ENCODE measurements at regions of chr12 and their contacts with region 1.

Region 1: GRCh38 chr12:55073043-55074022 is 52.9 kb upstream of the OR9K2 start:
- DNase-seq: peak; percentile 90
- H3K4me3 Mint-ChIP-seq: no peak overlapping the region
- H3K27ac Mint-ChIP-seq: no peak overlapping the region
- H3K4me1 Mint-ChIP-seq: peaks cover 3% of the 10 kb centered on the region
- H3K27me3 Mint-ChIP-seq: peaks cover 21% of the 10 kb centered on the region

Region 2: GRCh38 chr12:54603173-54603814 is 470.0 kb before region 1 on chr12:
- CTCF ChIA-PET with region 1: interaction called, 5 read pairs
- intact Hi-C with region 1: loop called (anchors 2 kb)
- DNase-seq: peak; percentile 87
- H3K4me3 Mint-ChIP-seq: no peak overlapping the region
- H3K27ac Mint-ChIP-seq: no peak overlapping the region
- H3K4me1 Mint-ChIP-seq: peaks cover 2% of the 10 kb centered on the region
- H3K27me3 Mint-ChIP-seq: no peaks in the 10 kb centered on the region

Region 3: GRCh38 chr12:54723379-54724256 is 349.7 kb before region 1 on chr12:
- CTCF ChIA-PET with region 1: interaction called, 13 read pairs
- intact Hi-C with region 1: loop called (anchors 1 kb)
- DNase-seq: peak; percentile 46
- H3K4me3 Mint-ChIP-seq: no peak overlapping the region
- H3K27ac Mint-ChIP-seq: no peak overlapping the region
- H3K4me1 Mint-ChIP-seq: peaks cover 19% of the 10 kb centered on the region
- H3K27me3 Mint-ChIP-seq: no peaks in the 10 kb centered on the region

Region 4: GRCh38 chr12:54853995-54854566 is 219.3 kb before region 1 on chr12 and contains the start of gene MUCL1:
- CTCF ChIA-PET with region 1: interaction called, 27 read pairs
- intact Hi-C with region 1: loop called (anchors 1 kb)
- DNase-seq: peak; percentile 89
- H3K4me3 Mint-ChIP-seq: no peak within 1 kb of the TSS
- H3K27ac Mint-ChIP-seq: no peak within 1 kb of the TSS
- H3K4me1 Mint-ChIP-seq: peaks cover 16% of the 10 kb centered on the region
- H3K27me3 Mint-ChIP-seq: no peaks in the 10 kb centered on the region
- total RNA-seq, gene MUCL1: not detected

Region 5: GRCh38 chr12:54984658-54985376 is 88.5 kb before region 1 on chr12 and contains the start of gene TESPA1:
- CTCF ChIA-PET with region 1: interaction called, 22 read pairs
- intact Hi-C with region 1: no loop called
- DNase-seq: peak; percentile 94
- H3K4me3 Mint-ChIP-seq: peak within 1 kb of the TSS; percentile 75
- H3K27ac Mint-ChIP-seq: peak within 1 kb of the TSS; percentile 89
- H3K4me1 Mint-ChIP-seq: peaks cover 56% of the 10 kb centered on the region
- H3K27me3 Mint-ChIP-seq: no peaks in the 10 kb centered on the region
- total RNA-seq, gene TESPA1: 43.9 to 45.1 TPM

Region 6: DNA sequence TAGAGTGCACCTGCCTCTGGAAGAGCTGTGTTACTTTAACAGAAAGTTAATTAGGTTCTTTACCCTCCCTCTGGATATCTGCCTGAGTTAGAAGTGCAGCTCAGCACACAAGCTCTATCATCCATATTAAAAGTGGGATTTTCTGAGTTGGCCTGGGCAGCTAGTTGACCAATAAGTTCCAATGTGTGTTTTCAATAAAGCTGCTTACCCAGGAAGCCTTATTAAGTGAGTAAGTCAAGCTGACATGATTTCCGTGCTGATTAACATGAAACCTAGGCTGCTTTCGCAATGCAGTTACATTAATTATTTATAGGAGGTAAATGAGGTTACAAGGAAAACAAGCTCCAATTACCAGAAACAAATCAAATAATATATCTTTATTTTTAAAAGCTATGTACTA is 48.8 kb before region 1 on chr12:
- CTCF ChIA-PET with region 1: interaction called, 14 read pairs
- intact Hi-C with region 1: no loop called
- DNase-seq: no peak
- H3K4me3 Mint-ChIP-seq: no peak overlapping the region
- H3K27ac Mint-ChIP-seq: no peak overlapping the region
- H3K4me1 Mint-ChIP-seq: peaks cover 7% of the 10 kb centered on the region
- H3K27me3 Mint-ChIP-seq: peaks cover 24% of the 10 kb centered on the region

Region 7: GRCh38 chr12:55061024-55061423 is 12.3 kb before region 1 on chr12:
- CTCF ChIA-PET with region 1: interaction called, 15 read pairs
- intact Hi-C with region 1: no loop called
- DNase-seq: no peak
- H3K4me3 Mint-ChIP-seq: no peak overlapping the region
- H3K27ac Mint-ChIP-seq: no peak overlapping the region
- H3K4me1 Mint-ChIP-seq: peaks cover 10% of the 10 kb centered on the region
- H3K27me3 Mint-ChIP-seq: no peaks in the 10 kb centered on the region

Region 8: DNA sequence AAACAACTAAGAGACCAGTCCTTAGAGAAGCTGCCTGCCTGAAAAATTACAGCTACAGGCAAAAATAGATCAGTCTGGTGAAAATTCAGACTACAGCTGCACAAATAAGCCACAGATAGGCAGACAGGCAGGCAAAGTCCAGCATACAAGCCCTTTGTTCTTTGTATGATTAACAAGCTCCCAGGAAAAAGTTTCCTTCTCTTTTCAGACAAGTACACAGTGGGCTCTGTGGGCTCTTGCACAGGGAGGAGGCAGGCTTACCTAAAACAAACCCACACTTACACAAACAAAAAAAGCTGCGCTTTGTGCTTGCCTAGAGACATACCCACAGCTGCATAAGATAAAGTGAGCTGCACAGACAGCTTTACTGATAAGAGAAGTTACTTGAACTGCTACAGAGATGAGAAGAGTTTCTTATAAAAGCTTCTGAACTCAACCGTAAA is 426.5 kb after region 1 on chr12:
- CTCF ChIA-PET with region 1: no interaction called
- intact Hi-C with region 1: no loop called
- DNase-seq: no peak
- H3K4me3 Mint-ChIP-seq: no peak overlapping the region
- H3K27ac Mint-ChIP-seq: no peak overlapping the region
- H3K4me1 Mint-ChIP-seq: no peaks in the 10 kb centered on the region
- H3K27me3 Mint-ChIP-seq: peaks cover 1% of the 10 kb centered on the region

Region 9: DNA sequence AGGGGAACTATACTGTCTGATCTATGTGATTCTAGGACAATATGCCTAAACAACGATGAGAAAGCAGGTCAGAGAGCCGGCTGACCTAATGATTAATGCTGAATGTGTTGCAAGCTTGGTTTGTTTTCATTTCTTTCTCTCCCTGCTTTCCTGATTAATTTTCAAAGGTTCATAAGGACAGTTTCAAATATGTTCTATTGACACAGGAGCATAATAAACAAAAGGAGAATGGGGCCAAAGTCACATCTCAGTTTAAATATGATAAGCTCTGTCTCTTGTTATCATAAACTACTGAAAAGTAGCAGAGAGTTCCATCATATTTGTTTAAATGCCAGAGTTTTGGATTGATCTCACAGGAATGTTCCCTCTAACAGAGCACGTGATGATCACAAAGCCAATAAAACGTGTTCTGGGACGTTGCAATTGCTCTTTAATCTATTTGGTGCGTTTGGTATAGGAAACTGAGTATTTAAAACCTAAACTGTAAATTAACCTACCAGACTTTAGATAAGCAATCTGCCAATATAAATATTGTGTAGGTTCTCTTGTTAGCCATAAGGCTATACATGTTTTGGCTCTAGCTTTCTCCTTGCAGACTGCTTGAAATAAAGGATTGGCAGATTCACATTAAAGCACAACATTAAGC is 1686.1 kb after region 1 on chr12:
- CTCF ChIA-PET with region 1: no interaction called
- intact Hi-C with region 1: no loop called
- DNase-seq: no peak
- H3K4me3 Mint-ChIP-seq: no peak overlapping the region
- H3K27ac Mint-ChIP-seq: no peak overlapping the region
- H3K4me1 Mint-ChIP-seq: peaks cover 6% of the 10 kb centered on the region
- H3K27me3 Mint-ChIP-seq: no peaks in the 10 kb centered on the region